CD4-positive, alpha-beta memory T cell (primary cell): ENCODE measurements at regions of chr12 and their contacts with region 1.

Region 1: DNA sequence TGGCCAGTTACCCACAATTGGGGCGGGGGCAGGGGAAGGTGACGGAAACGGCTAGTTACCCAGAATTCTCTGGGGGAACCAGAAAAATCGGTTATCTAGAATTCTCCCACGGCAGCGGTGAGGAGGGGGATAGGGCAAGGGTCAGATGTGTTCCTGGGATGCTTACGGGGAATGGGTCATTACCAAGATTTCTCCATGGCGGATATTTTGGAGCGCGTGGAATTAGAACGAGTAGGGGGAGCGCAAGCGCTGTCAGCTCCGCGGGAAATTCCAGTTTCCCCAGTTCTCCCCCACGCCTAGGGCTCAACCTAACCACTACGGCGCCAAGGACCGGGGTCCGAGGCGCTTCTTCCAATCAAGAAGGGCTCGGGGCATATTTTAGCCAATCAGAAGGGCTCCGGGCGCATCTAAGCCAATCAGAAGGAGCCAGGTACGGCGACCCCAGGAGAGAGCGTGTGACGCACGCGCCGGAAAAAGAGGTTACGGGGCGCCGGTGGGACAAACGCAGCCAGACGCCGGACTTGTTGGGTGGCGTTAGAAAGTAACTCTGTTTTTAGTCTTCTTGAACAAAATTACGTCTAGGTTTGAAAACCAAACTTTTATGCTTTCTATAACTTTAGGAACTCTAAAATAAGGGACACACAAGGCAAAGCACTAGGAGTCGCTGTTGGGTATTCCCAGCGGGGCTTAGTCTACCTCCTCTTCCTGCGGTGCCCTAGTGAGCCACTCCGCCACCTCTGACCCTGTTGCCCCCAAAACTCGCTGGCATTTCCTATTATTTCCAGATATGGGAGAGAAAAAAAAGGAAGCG is at the start of gene PAN2:
- DNase-seq: peak; percentile 92 to 96 (median 93)
- H3K4me3 ChIP-seq: peak within 1 kb of the TSS; percentile 69 to 83
- H3K4me3 Mint-ChIP-seq: peak within 1 kb of the TSS; percentile 89 to 99 (median 94)
- H3K27ac ChIP-seq: peak within 1 kb of the TSS; percentile 99
- H3K27ac Mint-ChIP-seq: peak within 1 kb of the TSS; percentile 99 to 100 (median 100)
- H3K4me1 ChIP-seq: peaks cover 37% of the 10 kb centered on the region
- H3K4me1 Mint-ChIP-seq: peaks cover 23 to 50% (median 30%) of the 10 kb centered on the region in 4 donors
- H3K27me3 ChIP-seq: no peaks in the 10 kb centered on the region
- H3K27me3 Mint-ChIP-seq: peaks cover 0 to 2% of the 10 kb centered on the region in 2 donors
- total RNA-seq, gene PAN2: 193 to 203 TPM

Region 2: GRCh38 chr12:56266693-56267442 is 67.0 kb before region 1 on chr12 and contains the start of gene COQ10A:
- CTCF ChIA-PET with region 1: no interaction called
- POLR2A ChIA-PET with region 1: interaction called, 12 read pairs
- intact Hi-C with region 1: no loop called
- DNase-seq: peak; percentile 89 to 96 (median 91)
- H3K4me3 ChIP-seq: peak within 1 kb of the TSS; percentile 27 to 90
- H3K4me3 Mint-ChIP-seq: peak within 1 kb of the TSS; percentile 89 to 99 (median 96)
- H3K27ac ChIP-seq: peak within 1 kb of the TSS; percentile 84
- H3K27ac Mint-ChIP-seq: peak within 1 kb of the TSS; percentile 90 to 99 (median 97)
- H3K4me1 ChIP-seq: peaks cover 14% of the 10 kb centered on the region
- H3K4me1 Mint-ChIP-seq: peaks cover 10 to 23% (median 16%) of the 10 kb centered on the region in 4 donors
- H3K27me3 ChIP-seq: no peaks in the 10 kb centered on the region
- H3K27me3 Mint-ChIP-seq: no peaks in the 10 kb centered on the region
- total RNA-seq, gene COQ10A: 35.3 to 38.6 TPM

Region 3: DNA sequence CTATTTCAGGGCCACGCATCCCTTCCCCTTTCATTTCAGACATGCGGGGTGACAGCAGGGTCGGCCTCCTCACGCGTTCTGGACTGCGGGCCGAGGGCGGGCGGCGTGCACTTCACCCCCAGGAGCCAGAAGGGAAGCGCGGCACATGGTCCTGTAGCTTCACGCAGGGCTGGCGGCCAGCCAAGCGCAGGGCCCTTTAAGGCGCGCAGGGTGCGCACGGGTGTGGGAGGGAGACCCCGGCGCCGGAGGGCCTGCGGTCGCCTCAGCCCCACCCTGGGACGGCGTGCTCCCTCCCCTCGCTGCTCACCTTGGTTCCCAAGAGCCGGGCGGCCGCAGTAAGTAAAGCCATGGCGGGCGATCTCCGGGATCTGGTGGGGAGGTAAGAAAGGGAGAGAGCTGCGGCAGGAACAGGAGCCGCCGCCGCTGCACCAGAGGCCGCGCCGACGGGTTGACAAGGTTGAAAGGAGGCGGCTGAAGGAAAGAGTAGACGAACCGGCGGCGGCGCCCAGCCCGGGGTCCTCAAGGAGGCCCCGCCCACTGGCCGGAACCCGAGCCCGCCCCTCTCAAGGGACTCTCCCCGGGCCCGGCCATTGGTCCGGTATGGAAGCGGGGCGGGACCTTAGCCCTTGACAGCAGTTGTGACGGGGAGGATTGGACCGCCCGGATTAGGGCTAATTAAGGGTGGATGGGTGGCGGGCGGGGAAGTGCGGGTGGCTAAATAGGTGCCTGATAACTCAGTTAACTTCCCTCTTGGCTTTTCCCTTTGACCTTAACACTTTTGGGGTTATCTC is 33.8 kb before region 1 on chr12 and contains the start of gene CS:
- CTCF ChIA-PET with region 1: no interaction called
- POLR2A ChIA-PET with region 1: interaction called, 11 read pairs
- intact Hi-C with region 1: loop called (anchors 1 kb)
- DNase-seq: peak; percentile 98 to 99 (median 99)
- H3K4me3 ChIP-seq: peak within 1 kb of the TSS; percentile 79 to 97
- H3K4me3 Mint-ChIP-seq: peak within 1 kb of the TSS; percentile 90 to 97 (median 96)
- H3K27ac ChIP-seq: peak within 1 kb of the TSS; percentile 99
- H3K27ac Mint-ChIP-seq: peak within 1 kb of the TSS; percentile 95 to 99 (median 98)
- H3K4me1 ChIP-seq: peaks cover 57% of the 10 kb centered on the region
- H3K4me1 Mint-ChIP-seq: peaks cover 31 to 66% (median 50%) of the 10 kb centered on the region in 4 donors
- H3K27me3 ChIP-seq: no peaks in the 10 kb centered on the region
- H3K27me3 Mint-ChIP-seq: no peaks in the 10 kb centered on the region
- total RNA-seq, gene CS: 134 to 136 TPM

Region 4: DNA sequence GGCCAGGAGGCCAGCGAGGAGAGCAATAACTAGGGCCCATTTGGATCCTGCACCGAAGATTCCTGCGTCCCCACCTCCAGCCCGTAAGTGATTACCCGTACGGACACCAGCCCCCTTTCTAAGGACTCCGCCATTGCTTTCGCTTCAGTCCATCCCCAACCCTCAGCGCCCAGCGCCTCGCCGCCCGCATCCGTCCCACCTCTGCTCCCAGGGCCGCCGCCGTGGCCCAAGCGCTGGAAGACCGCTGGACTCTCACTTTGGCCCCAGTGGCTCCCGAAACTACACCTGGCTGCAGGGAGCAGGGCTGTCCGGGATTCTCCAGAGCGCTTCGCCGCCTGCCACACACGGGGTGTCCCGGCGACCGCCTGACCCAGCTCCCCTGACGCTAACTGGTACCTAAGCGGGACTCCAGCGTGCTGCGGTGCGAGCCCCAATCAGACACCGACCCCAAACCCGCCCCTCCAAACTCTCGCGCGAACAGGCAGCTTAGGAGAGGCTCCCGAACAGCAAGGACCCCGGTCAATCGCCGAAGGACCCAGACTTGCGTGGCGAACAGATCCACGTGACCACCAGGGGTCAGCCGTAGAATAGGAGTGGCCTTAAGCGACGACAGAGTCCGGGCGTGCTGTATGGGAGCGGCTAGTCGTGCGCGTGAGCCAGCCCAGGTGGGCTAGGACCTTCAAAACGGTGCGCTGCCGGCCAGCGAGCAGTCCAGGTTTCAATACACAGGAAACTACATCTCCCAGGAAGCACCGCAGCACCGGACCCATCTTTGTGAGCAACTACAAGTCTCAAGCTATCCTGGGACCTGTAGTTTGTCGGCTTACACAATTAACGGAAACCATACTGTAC is 18.0 kb before region 1 on chr12 and contains the start of gene CNPY2:
- CTCF ChIA-PET with region 1: interaction called, 9 read pairs
- POLR2A ChIA-PET with region 1: interaction called, 109 read pairs
- intact Hi-C with region 1: loop called (anchors 1 kb)
- DNase-seq: peak; percentile 93 to 97 (median 95)
- H3K4me3 ChIP-seq: peak within 1 kb of the TSS; percentile 99 to 100
- H3K4me3 Mint-ChIP-seq: peak within 1 kb of the TSS; percentile 97 to 100 (median 98)
- H3K27ac ChIP-seq: peak within 1 kb of the TSS; percentile 95
- H3K27ac Mint-ChIP-seq: peak within 1 kb of the TSS; percentile 98 to 100 (median 99)
- H3K4me1 ChIP-seq: peaks cover 18% of the 10 kb centered on the region
- H3K4me1 Mint-ChIP-seq: peaks cover 1 to 25% (median 13%) of the 10 kb centered on the region in 4 donors
- H3K27me3 ChIP-seq: no peaks in the 10 kb centered on the region
- H3K27me3 Mint-ChIP-seq: no peaks in the 10 kb centered on the region
- total RNA-seq, gene CNPY2: 93.5 to 95.8 TPM

Region 5: GRCh38 chr12:56346703-56347102 is 12.8 kb after region 1 on chr12:
- CTCF ChIA-PET with region 1: interaction called, 11 read pairs
- POLR2A ChIA-PET with region 1: interaction called, 19 read pairs
- intact Hi-C with region 1: no loop called
- DNase-seq: peak in 1 of 5 donors; percentile 18
- H3K4me3 ChIP-seq: no peak overlapping the region
- H3K4me3 Mint-ChIP-seq: no peak overlapping the region
- H3K27ac ChIP-seq: no peak overlapping the region
- H3K27ac Mint-ChIP-seq: peak overlapping the region in 4 of 7 donors; percentile 30 to 79 (median 49)
- H3K4me1 ChIP-seq: no peaks in the 10 kb centered on the region
- H3K4me1 Mint-ChIP-seq: peaks cover 0 to 5% (median 2%) of the 10 kb centered on the region in 4 donors
- H3K27me3 ChIP-seq: no peaks in the 10 kb centered on the region
- H3K27me3 Mint-ChIP-seq: no peaks in the 10 kb centered on the region

Region 6: DNA sequence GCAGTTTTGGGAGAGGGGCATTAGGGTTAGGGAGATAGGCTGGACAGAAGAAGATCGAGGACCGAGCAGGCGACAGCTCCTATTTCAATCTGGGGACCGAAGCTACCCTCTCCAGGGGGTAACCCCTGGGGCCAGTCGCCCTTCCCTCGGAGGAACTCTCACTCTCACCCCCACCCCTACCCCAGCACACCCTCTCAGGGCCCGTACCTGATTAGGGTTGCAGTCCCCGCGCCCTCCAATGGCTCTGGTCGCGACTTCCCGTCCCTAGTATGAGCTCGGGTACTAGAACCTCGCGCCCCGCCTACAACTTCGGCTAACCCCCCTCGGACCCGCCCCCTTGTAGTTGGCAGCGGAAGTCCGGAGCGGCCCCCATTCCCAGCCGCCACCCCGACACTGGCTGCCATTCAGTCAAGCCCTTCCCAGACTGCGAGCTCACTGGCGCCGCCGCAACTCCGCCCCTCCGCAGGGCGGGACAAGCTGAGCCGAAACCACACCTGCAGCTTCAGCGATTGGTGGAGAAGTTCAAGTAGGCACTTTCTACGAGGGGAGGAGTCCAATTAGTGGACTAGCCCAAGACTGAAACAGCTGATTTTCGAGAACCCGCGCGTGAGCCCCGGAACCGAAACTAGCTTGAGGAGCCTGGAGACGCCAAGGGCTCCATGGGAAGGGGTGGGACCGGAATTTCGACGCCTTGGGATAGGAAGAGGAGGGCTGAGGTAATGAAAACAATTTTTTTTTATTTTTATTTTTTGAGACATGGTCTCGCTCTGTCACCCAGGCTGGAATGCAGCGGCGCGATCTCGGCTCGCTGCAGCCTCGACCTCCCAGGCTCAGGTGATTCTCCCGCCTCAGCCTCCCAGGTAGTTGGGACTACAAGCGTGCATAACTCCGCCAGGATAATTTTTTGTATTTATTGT is 26.2 kb after region 1 on chr12 and contains the start of gene STAT2:
- CTCF ChIA-PET with region 1: interaction called, 35 read pairs
- POLR2A ChIA-PET with region 1: interaction called, 264 read pairs
- intact Hi-C with region 1: loop called (anchors 1 kb)
- DNase-seq: peak; percentile 99 to 100 (median 100)
- H3K4me3 ChIP-seq: peak within 1 kb of the TSS; percentile 78 to 97
- H3K4me3 Mint-ChIP-seq: peak within 1 kb of the TSS; percentile 92 to 98 (median 96)
- H3K27ac ChIP-seq: peak within 1 kb of the TSS; percentile 84
- H3K27ac Mint-ChIP-seq: peak within 1 kb of the TSS; percentile 89 to 98 (median 96)
- H3K4me1 ChIP-seq: peaks cover 29% of the 10 kb centered on the region
- H3K4me1 Mint-ChIP-seq: peaks cover 16 to 30% (median 21%) of the 10 kb centered on the region in 4 donors
- H3K27me3 ChIP-seq: no peaks in the 10 kb centered on the region
- H3K27me3 Mint-ChIP-seq: no peaks in the 10 kb centered on the region
- total RNA-seq, gene STAT2: 192 to 193 TPM

Region 7: DNA sequence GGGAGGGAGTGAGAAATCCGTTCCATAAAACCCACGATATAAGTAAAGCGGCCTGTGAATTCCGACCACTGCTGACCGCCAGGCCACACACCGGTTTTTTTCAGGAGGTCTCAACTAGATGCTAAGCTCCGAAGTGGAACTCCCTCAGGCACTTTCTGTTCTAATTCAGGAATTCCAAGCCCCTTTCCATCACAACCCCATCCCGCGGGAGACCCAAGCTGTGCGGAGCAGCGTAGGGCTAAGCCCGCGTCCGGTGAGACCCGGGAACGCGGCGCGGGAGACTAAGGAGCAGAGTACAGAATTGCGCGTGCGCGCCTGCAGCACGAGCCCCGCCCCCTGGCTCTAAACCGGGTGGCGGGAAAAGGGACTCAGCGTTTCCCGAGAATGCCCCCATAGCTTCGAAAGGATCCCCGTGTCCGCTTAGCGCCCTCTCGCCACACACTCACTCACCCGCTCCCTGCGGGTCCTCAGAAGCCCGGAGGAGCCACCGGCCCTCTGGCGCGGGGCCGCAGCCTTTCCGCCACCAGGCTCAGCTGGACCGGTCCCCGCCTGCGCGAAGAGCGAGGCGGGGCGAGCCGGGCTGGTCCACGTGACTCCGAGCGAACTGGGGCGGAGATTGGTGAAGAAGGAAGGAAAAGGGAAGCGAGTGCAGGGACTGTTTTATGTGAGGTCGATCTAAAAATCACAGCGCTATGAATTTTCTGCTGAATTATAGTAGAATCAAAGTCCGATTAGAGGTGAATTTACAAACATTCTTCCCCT is 115.2 kb after region 1 on chr12 and contains the start of gene TIMELESS:
- CTCF ChIA-PET with region 1: interaction called, 4 read pairs
- POLR2A ChIA-PET with region 1: interaction called, 15 read pairs
- intact Hi-C with region 1: loop called (anchors 1 kb)
- DNase-seq: peak; percentile 85 to 90 (median 86)
- H3K4me3 ChIP-seq: peak within 1 kb of the TSS; percentile 96
- H3K4me3 Mint-ChIP-seq: peak within 1 kb of the TSS; percentile 90 to 95 (median 94)
- H3K27ac ChIP-seq: peak within 1 kb of the TSS; percentile 75
- H3K27ac Mint-ChIP-seq: peak within 1 kb of the TSS; percentile 75 to 98 (median 97)
- H3K4me1 ChIP-seq: peaks cover 7% of the 10 kb centered on the region
- H3K4me1 Mint-ChIP-seq: peaks cover 11 to 28% (median 16%) of the 10 kb centered on the region in 4 donors
- H3K27me3 ChIP-seq: no peaks in the 10 kb centered on the region
- H3K27me3 Mint-ChIP-seq: no peaks in the 10 kb centered on the region
- total RNA-seq, gene TIMELESS: 7.3 to 7.5 TPM